AG04450 (cell line): ENCODE measurements at regions of chr3 and their contacts with region 1.

Region 1: GRCh38 chr3:187679638-187680396 is 9.6 kb upstream of the SST start:
- DNase-seq: peak; percentile 24
- H3K4me3 ChIP-seq: no peak overlapping the region
- H3K27ac ChIP-seq: no peak overlapping the region
- H3K27me3 ChIP-seq: peaks cover 29% of the 10 kb centered on the region
- CTCF ChIP-seq: peak; percentile 98

Region 2: DNA sequence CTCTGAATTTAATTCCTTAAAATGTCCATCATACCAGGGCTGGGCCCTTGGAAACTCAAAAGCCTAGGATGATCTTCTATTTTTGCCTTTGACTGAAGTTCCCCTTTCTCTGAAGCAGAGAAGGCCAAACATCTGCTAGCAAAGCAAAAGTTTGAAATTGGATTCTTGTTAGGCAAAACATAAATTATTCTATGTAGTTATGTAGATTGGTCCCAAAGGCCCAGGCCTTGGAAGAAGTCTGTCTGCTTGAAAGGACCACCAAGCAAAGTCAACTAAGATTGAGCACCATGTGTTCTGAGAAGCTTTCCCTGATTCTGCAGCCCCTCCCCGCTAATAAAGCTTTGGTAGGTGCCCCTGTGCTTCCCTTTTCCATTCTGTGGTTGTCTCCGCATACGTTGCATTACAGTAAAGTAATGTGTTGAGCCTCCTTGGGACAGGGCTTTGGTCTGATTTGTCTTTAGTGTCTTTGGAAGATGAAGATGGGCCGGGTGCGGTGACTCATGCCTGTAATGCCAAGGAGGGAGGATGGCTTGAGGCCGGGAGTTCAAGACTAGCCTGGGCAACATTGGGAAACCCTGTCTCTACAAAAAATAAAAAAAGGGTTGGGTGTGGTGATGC is 597.0 kb before region 1 on chr3:
- CTCF ChIA-PET with region 1: no interaction called
- POLR2A ChIA-PET with region 1: no interaction called
- DNase-seq: no peak
- H3K4me3 ChIP-seq: no peak overlapping the region
- H3K27ac ChIP-seq: no peak overlapping the region
- H3K27me3 ChIP-seq: no peaks in the 10 kb centered on the region
- CTCF ChIP-seq: no peak

Region 3: GRCh38 chr3:187197057-187197649 is 482.7 kb before region 1 on chr3 and contains the start of gene RTP1:
- CTCF ChIA-PET with region 1: interaction called, 11 read pairs
- POLR2A ChIA-PET with region 1: no interaction called
- DNase-seq: no peak
- H3K4me3 ChIP-seq: no peak within 1 kb of the TSS
- H3K27ac ChIP-seq: no peak within 1 kb of the TSS
- H3K27me3 ChIP-seq: peaks cover 12% of the 10 kb centered on the region
- CTCF ChIP-seq: no peak
- polyA plus RNA-seq, gene RTP1: not detected in 2 replicates

Region 4: GRCh38 chr3:187264021-187264420 is 415.8 kb before region 1 on chr3:
- CTCF ChIA-PET with region 1: interaction called, 16 read pairs
- POLR2A ChIA-PET with region 1: no interaction called
- DNase-seq: peak; percentile 57
- H3K4me3 ChIP-seq: no peak overlapping the region
- H3K27ac ChIP-seq: no peak overlapping the region
- H3K27me3 ChIP-seq: no peaks in the 10 kb centered on the region
- CTCF ChIP-seq: no peak

Region 5: GRCh38 chr3:187319699-187320302 is 360.0 kb before region 1 on chr3:
- CTCF ChIA-PET with region 1: interaction called, 696 read pairs
- POLR2A ChIA-PET with region 1: interaction called, 3 read pairs
- DNase-seq: peak; percentile 34
- H3K4me3 ChIP-seq: no peak overlapping the region
- H3K27ac ChIP-seq: no peak overlapping the region
- H3K27me3 ChIP-seq: peaks cover 15% of the 10 kb centered on the region
- CTCF ChIP-seq: peak; percentile 93

Region 6: DNA sequence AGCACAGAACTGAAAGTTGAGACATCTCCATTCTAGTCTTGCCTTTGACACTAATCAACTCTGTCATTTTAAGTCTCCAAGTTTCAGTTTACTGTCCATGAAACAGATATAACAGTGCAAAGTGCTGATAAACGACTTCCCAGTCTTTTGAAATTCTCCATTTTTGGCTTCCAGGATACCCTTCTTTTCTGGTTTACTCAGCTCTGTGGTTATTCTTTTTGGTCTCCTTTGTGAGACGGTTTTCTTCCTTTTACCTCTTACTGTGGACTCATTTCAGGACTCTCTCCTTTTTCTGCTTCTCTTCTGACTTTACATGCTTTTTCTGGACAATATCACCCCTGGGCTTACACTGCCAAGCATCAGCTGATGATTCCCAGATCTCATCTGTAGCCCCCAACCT is 28.5 kb before region 1 on chr3:
- CTCF ChIA-PET with region 1: interaction called, 10 read pairs
- POLR2A ChIA-PET with region 1: no interaction called
- DNase-seq: no peak
- H3K4me3 ChIP-seq: no peak overlapping the region
- H3K27ac ChIP-seq: no peak overlapping the region
- H3K27me3 ChIP-seq: peaks cover 10% of the 10 kb centered on the region
- CTCF ChIP-seq: no peak

Region 7: DNA sequence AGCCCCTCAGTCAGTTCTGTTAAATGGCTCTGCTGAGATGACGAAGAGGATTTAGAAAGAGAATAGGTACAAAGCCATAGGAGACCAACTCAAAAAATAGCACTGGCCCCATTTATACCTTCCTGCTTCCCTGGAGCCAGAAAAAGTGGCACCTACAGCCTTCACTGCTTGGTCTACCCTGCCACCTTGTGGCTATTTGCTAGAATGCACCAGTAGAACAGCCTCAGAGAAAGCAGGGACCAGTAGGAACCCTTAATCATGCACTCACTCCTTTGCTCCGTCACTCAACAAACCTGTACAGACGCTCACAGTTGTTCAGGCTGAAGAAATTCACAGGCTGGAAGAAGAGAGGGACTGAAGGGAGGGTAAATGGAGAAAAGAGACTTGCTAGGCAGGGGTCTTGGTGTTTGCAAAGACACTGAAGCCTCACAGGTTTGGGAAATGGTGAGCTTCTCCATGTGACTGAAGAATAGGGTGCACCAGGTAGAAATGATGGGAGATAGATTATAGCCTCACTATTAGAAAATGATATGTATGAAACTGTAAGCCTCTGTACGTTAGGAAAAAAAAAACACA is 34.7 kb after region 1 on chr3:
- CTCF ChIA-PET with region 1: interaction called, 52 read pairs
- POLR2A ChIA-PET with region 1: no interaction called
- DNase-seq: peak; percentile 37
- H3K4me3 ChIP-seq: no peak overlapping the region
- H3K27ac ChIP-seq: no peak overlapping the region
- H3K27me3 ChIP-seq: peaks cover 7% of the 10 kb centered on the region
- CTCF ChIP-seq: peak; percentile 98